GM12878 (cell line): ENCODE measurements at regions of chr11 and their contacts with region 1.

Region 1: GRCh38 chr11:65540297-65541092 is 15.6 kb downstream of the SCYL1 start:
- DNase-seq: peak; percentile 71
- ATAC-seq: peak; percentile 95
- H3K4me3 ChIP-seq: peak overlapping the region; percentile 72
- H3K27ac ChIP-seq: peak overlapping the region; percentile 61
- H3K4me1 ChIP-seq: peaks cover 6% of the 10 kb centered on the region
- H3K27me3 ChIP-seq: no peaks in the 10 kb centered on the region
- CTCF ChIP-seq: peak; percentile 82 to 91 (median 82)
- EP300 ChIP-seq: no peak
- POLR2A ChIP-seq: peak; percentile 81
- RAD21 ChIP-seq: peak; percentile 74

Region 2: GRCh38 chr11:65530157-65530496 is 10.4 kb before region 1 on chr11:
- CTCF ChIA-PET with region 1: interaction called, 18 read pairs
- POLR2A ChIA-PET with region 1: interaction called, 13 read pairs
- RAD21 ChIA-PET with region 1: interaction called, 6 read pairs
- SMC1A ChIA-PET with region 1: interaction called, 7 read pairs
- in situ Hi-C with region 1: no loop called
- intact Hi-C with region 1: no loop called
- DNase-seq: no peak
- ATAC-seq: peak; percentile 65
- H3K4me3 ChIP-seq: no peak overlapping the region
- H3K27ac ChIP-seq: no peak overlapping the region
- H3K4me1 ChIP-seq: peaks cover 6% of the 10 kb centered on the region
- H3K27me3 ChIP-seq: no peaks in the 10 kb centered on the region
- CTCF ChIP-seq: peak in 2 of 3 experiments; percentile 46 to 49; a peak in 3 of 6 replicates
- EP300 ChIP-seq: no peak
- POLR2A ChIP-seq: no peak
- RAD21 ChIP-seq: no peak

Region 3: DNA sequence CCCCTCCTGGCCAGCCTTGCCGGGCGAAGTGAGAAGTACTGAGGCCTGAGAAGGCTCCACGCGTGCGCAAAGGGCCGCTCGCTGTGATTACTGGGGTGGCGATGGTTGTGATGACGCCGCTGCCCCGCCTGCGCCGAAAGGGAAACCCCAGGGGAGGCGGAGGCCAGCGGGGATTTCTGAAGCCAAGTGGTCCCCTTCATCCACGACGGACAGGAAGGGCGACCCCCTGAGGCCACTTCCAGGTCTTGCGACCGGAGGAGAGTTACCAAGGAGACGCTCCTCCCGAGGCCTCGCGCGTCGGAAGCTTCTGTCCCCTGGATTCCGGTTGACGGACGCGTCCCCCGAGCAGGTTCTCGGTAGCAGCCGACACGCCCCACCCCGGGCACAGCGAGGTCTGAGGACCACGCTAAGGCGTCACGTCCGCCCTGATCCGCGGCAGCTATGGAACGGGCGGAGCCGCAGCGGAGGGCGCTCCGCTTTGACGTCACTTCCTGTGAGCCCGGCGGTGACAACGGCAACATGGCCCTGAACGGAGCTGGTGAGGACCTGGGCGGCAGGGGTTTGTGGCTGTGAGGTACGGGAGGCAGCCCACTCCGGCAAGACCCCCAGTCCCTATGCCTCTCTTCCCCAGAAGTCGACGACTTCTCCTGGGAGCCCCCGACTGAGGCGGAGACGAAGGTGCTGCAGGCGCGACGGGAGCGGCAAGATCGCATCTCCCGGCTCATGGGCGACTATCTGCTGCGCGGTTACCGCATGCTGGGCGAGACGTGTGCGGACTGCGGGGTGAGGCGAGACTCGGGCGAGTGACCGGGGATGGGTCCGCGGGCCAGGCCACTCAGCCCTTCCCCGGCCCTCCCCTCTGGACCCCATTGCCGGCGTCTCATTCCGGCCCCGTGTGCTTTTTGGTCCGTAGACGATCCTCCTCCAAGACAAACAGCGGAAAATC is 29.8 kb after region 1 on chr11 and contains the start of gene ZNRD2:
- CTCF ChIA-PET with region 1: interaction called, 89 read pairs
- POLR2A ChIA-PET with region 1: interaction called, 34 read pairs
- RAD21 ChIA-PET with region 1: interaction called, 58 read pairs
- SMC1A ChIA-PET with region 1: interaction called, 48 read pairs
- in situ Hi-C with region 1: no loop called
- intact Hi-C with region 1: loop called (anchors 1 kb)
- DNase-seq: peak; percentile 97
- ATAC-seq: peak; percentile 77
- H3K4me3 ChIP-seq: peak within 1 kb of the TSS; percentile 84
- H3K27ac ChIP-seq: peak within 1 kb of the TSS; percentile 76
- H3K4me1 ChIP-seq: peaks cover 33% of the 10 kb centered on the region
- H3K27me3 ChIP-seq: no peaks in the 10 kb centered on the region
- CTCF ChIP-seq: peak; percentile 69 to 79 (median 69)
- EP300 ChIP-seq: peak in 1 of 2 experiments; percentile 22; a peak in 2 of 4 replicates
- POLR2A ChIP-seq: peak; percentile 78
- RAD21 ChIP-seq: peak; percentile 55
- polyA plus RNA-seq, gene ZNRD2: 14.8 to 48.7 TPM

Region 4: DNA sequence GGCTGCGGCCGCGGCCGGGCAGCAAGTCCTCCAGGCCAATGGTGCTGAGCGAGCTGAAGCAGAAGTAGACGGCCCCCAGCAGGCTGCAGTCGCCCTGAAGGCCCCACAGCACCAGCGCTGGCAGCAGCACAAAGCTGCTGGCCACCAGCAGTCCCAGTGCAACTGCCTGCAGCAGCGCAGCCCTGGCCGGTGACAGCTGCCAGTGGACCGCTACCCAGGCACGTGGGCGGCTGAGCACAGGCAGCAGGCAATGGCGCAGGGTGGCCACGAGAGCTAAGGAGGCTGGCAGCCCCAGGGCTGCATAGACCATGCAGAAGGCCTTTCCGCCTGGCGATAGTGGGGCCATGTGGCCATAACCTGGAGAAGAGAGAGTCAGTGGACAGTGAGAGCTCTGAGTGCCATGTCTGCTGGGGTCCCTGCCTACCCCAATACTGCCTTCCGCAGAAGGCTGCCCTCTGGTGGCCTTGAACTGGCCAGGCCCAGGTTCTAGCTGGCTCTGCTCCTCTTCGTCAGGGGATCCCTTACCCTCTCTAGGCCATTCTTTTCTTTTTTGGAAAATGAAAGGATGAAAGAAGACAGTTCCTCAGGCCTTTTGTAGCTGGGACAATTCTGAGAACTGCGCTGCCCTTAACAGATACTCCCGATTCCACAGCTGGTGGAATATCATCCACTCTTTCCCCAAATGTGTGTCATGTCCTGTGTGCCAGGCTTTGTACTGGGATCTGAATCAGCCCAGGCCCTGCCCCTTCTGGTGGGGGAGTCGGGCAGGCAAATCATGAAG is 53.2 kb after region 1 on chr11:
- CTCF ChIA-PET with region 1: interaction called, 63 read pairs
- POLR2A ChIA-PET with region 1: interaction called, 8 read pairs
- RAD21 ChIA-PET with region 1: interaction called, 57 read pairs
- SMC1A ChIA-PET with region 1: interaction called, 35 read pairs
- in situ Hi-C with region 1: no loop called
- intact Hi-C with region 1: loop called (anchors 1 kb)
- DNase-seq: no peak
- ATAC-seq: peak; percentile 68
- H3K4me3 ChIP-seq: no peak overlapping the region
- H3K27ac ChIP-seq: no peak overlapping the region
- H3K4me1 ChIP-seq: peaks cover 11% of the 10 kb centered on the region
- H3K27me3 ChIP-seq: no peaks in the 10 kb centered on the region
- CTCF ChIP-seq: peak; percentile 62 to 71 (median 63)
- EP300 ChIP-seq: no peak
- POLR2A ChIP-seq: peak; percentile 48
- RAD21 ChIP-seq: peak; percentile 44